ENCODE measurements at regions of chr6 and their contacts with region 1.

Region 1: GRCh38 chr6:53426667-53427270 is 78.0 kb upstream of the ELOVL5 start:
- DNase-seq: no peak
- H3K4me3 Mint-ChIP-seq: no peak overlapping the region
- H3K27ac Mint-ChIP-seq: no peak overlapping the region
- H3K4me1 Mint-ChIP-seq: peaks cover 34% of the 10 kb centered on the region
- H3K27me3 Mint-ChIP-seq: peaks cover 14% of the 10 kb centered on the region

Region 2: DNA sequence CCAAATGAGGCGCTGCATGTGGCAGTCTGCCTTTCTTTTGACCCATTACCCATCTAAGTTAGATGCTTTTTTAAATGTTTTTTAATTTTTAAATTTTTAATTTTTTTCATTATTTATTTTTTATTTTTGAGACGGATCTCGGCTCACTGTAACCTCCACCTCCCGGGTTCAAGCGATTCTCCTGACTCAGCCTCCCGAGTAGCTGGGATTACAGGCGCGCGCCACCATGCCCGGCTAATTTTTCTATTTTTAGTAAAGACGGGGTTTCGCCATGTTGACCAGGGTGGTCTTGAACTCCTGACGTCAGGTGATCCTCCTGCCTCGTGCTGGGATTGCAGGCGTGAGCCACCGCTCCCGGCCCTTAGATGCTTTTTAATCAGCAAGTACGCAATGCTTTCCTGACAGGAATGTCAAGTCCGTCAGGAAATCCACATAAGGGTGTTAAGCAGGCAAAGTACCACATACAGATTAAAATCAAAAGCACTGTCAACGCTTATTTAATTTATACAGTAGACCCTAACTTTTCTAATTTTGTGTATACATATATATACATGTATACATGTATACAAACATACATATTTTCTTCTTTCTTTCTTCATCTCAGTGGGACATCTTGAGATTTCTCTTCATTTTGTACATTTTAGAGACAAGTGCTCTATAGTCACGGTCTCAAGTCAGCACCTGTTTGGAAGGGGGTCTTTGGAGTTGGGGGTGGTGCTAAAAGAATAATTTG is 430.7 kb before region 1 on chr6:
- CTCF ChIA-PET with region 1: no interaction called
- intact Hi-C with region 1: loop called (anchors 10 kb)
- DNase-seq: peak; percentile 54
- H3K4me3 Mint-ChIP-seq: peak overlapping the region; percentile 98
- H3K27ac Mint-ChIP-seq: peak overlapping the region; percentile 99
- H3K4me1 Mint-ChIP-seq: peaks cover 29% of the 10 kb centered on the region
- H3K27me3 Mint-ChIP-seq: peaks cover 13% of the 10 kb centered on the region

Region 3: DNA sequence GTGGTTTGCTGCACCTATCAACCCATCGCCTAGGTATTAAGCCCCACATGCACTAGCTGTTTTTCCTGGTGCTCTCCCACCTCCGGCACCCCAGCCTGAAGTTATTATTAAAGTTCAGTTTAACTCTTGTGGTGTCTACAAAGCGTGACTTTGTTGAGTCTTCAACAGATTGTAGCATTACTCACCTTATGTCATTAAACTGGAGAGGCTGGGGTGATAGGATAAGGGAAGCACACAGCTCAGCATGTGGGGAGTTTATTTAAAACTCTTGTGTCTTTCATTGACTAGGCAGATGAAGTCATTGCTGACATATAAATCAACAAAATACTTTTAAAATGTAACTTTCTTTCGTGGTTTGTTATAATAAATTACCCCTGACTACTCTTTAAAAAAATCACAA is 193.5 kb before region 1 on chr6:
- CTCF ChIA-PET with region 1: no interaction called
- intact Hi-C with region 1: loop called (anchors 1 kb)
- DNase-seq: no peak
- H3K4me3 Mint-ChIP-seq: no peak overlapping the region
- H3K27ac Mint-ChIP-seq: no peak overlapping the region
- H3K4me1 Mint-ChIP-seq: peaks cover 24% of the 10 kb centered on the region
- H3K27me3 Mint-ChIP-seq: no peaks in the 10 kb centered on the region

Region 4: DNA sequence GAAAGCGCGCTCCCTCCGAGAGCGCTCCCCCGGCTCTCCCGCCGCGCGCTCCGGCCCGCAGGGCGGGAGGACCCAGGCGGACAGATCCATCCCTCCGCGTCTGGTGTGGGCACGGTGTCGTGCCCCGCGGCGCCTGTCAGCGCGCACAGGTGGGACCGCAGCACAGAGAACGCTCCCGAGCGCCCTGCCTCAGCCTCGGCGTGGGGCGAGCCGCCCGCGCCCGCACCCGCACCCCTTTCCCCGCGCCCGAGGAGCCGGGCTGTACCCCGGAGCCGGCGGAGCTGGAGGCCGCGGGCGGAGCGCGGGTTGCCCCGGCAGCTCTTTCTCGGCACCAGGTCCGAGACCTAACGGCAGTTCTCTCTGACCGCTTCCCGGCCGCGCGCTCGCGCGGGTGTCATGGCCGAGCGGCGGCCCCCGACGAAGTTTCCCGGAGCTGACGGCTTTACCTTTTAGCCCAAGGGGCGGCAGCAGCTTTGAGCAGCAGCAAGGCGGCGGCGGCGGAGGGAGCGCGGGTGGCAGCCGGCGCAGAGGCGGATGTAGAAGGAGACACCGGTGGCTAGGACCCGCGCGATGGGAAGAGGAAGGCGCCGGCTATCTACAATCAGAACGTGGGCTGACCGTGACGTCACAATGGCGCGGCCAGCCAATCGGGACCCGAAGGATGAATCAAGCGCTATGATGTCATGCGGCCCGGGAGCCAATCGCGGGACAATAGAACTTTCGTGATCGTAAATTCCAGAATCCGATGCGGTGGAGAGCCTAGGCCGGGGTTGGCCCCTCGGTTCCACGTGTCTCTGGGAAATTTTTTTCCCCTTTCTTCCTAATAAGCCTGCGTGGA is 78.2 kb before region 1 on chr6 and contains the start of gene ELOVL5:
- CTCF ChIA-PET with region 1: no interaction called
- intact Hi-C with region 1: loop called (anchors 1 kb)
- DNase-seq: peak; percentile 99
- H3K4me3 Mint-ChIP-seq: peak within 1 kb of the TSS; percentile 80
- H3K27ac Mint-ChIP-seq: peak within 1 kb of the TSS; percentile 89
- H3K4me1 Mint-ChIP-seq: peaks cover 47% of the 10 kb centered on the region
- H3K27me3 Mint-ChIP-seq: no peaks in the 10 kb centered on the region
- total RNA-seq, gene ELOVL5: 132 to 136 TPM

Region 5: DNA sequence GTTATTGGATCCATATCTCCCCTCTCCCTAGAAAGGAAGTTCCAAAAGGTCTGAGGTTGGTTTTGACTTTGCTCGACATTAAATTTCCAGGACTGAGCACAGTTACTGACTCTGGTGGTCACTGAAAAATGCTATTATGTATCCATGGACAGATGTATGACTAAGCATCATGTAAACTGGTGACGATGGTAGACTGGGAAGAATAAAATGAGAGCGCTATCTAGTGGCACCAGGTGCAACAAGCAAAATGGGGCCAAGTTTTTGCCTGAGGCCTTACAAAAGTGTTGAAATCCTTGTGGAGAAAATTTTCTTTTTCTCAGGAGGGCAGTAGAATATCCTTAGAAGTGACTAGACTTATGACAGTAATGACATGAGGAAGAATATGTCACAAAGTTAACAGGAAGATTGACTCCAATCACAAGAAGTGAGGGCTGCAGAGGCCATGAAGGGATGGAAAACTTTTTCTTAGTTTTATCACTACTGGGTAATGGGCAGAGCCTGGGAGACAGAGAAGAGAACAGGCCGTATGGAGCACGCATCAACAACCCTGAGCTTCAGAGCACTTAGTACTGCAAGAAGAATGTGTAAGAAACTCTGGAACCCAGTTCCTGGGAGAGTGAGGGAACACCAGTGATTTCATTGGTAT is 10.9 kb after region 1 on chr6:
- CTCF ChIA-PET with region 1: interaction called, 43 read pairs
- intact Hi-C with region 1: loop called (anchors 2 kb)
- DNase-seq: peak; percentile 48
- H3K4me3 Mint-ChIP-seq: no peak overlapping the region
- H3K27ac Mint-ChIP-seq: no peak overlapping the region
- H3K4me1 Mint-ChIP-seq: peaks cover 21% of the 10 kb centered on the region
- H3K27me3 Mint-ChIP-seq: peaks cover 3% of the 10 kb centered on the region

Region 6: GRCh38 chr6:53492860-53493634 is 66.3 kb after region 1 on chr6:
- CTCF ChIA-PET with region 1: interaction called, 4 read pairs
- intact Hi-C with region 1: loop called (anchors 1 kb)
- DNase-seq: peak; percentile 45
- H3K4me3 Mint-ChIP-seq: no peak overlapping the region
- H3K27ac Mint-ChIP-seq: no peak overlapping the region
- H3K4me1 Mint-ChIP-seq: peaks cover 10% of the 10 kb centered on the region
- H3K27me3 Mint-ChIP-seq: peaks cover 16% of the 10 kb centered on the region

Region 7: GRCh38 chr6:53651764-53652401 is 225.1 kb after region 1 on chr6:
- CTCF ChIA-PET with region 1: no interaction called
- intact Hi-C with region 1: loop called (anchors 5 kb)
- DNase-seq: peak; percentile 81
- H3K4me3 Mint-ChIP-seq: peak overlapping the region; percentile 85
- H3K27ac Mint-ChIP-seq: peak overlapping the region; percentile 46
- H3K4me1 Mint-ChIP-seq: peaks cover 26% of the 10 kb centered on the region
- H3K27me3 Mint-ChIP-seq: no peaks in the 10 kb centered on the region

Region 8: DNA sequence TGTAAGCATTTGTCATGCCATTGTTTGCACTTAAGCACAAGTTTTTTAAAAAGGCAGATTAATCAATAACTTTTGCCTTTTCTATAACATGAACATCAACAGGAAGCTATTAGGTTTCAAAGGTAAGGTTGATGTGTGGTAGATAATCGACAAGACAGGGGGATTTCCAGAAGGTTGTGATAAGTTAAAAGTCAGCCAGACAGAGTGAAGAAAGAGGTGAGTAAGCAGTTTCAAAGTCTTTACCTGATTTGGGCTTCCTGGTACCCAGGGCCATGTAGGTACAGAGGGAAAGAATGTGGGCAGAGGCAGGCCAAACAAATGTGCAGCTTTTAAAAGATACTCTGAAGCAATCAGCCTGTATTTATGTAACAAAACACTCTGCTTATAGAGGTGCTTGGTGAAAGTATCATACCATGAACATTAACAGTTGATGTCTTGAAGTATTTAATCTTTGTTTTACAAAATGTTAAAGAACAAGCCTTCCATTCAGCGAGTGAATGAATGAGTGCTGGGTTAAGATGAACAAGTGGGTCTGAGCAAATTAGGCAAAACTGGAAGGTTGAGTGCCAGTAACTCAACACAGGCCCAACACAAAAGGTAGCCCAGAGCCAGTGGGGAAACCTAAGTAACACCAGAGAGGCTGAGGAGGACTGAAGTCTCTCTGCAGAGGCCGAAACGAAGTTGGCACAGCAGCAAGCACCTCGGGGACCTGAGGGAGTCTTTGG is 428.2 kb after region 1 on chr6:
- CTCF ChIA-PET with region 1: no interaction called
- intact Hi-C with region 1: no loop called
- DNase-seq: no peak
- H3K4me3 Mint-ChIP-seq: no peak overlapping the region
- H3K27ac Mint-ChIP-seq: no peak overlapping the region
- H3K4me1 Mint-ChIP-seq: peaks cover 11% of the 10 kb centered on the region
- H3K27me3 Mint-ChIP-seq: no peaks in the 10 kb centered on the region

Measured in activated naive CD4-positive, alpha-beta T cell treated with anti-CD3 and anti-CD28 coated beads for 36 hours (primary cell).